Activated T-helper 2 cell treated with anti-CD3 and anti-CD28 coated beads, Interferon-gamma antibody, Interleukin-2, Interleukin-4, amounts not matched to agents 10 μg/mL and 5 μg/mL and 100 μg/mL, durations not matched to agents 14 hours and 24 hours and 36 hours (primary cell): ENCODE measurements at regions of chr1 and their contacts with region 1.

Region 1: GRCh38 chr1:226679853-226680516 is 59.1 kb downstream of the ITPKB start:
- DNase-seq: peak; percentile 68
- H3K4me3 Mint-ChIP-seq: peak overlapping the region; percentile 79
- H3K27ac Mint-ChIP-seq: peak overlapping the region; percentile 95
- H3K4me1 Mint-ChIP-seq: peaks cover 88% of the 10 kb centered on the region
- H3K27me3 Mint-ChIP-seq: no peaks in the 10 kb centered on the region

Region 2: GRCh38 chr1:226457307-226457712 is 222.7 kb before region 1 on chr1:
- intact Hi-C with region 1: no loop called
- DNase-seq: peak; percentile 19
- H3K4me3 Mint-ChIP-seq: peak overlapping the region; percentile 28
- H3K27ac Mint-ChIP-seq: peak overlapping the region; percentile 6
- H3K4me1 Mint-ChIP-seq: peaks cover 7% of the 10 kb centered on the region
- H3K27me3 Mint-ChIP-seq: peaks cover 10% of the 10 kb centered on the region

Region 3: GRCh38 chr1:226642876-226643576 is 37.0 kb before region 1 on chr1:
- intact Hi-C with region 1: loop called (anchors 5 kb)
- DNase-seq: no peak
- H3K4me3 Mint-ChIP-seq: peak overlapping the region; percentile 47
- H3K27ac Mint-ChIP-seq: peak overlapping the region; percentile 84
- H3K4me1 Mint-ChIP-seq: peaks cover 28% of the 10 kb centered on the region
- H3K27me3 Mint-ChIP-seq: no peaks in the 10 kb centered on the region

Region 4: GRCh38 chr1:226662642-226663326 is 17.2 kb before region 1 on chr1:
- intact Hi-C with region 1: loop called (anchors 1 kb)
- DNase-seq: peak; percentile 80
- H3K4me3 Mint-ChIP-seq: peak overlapping the region; percentile 5
- H3K27ac Mint-ChIP-seq: peak overlapping the region; percentile 81
- H3K4me1 Mint-ChIP-seq: peaks cover 74% of the 10 kb centered on the region
- H3K27me3 Mint-ChIP-seq: no peaks in the 10 kb centered on the region

Region 5: GRCh38 chr1:226702957-226703831 is 23.2 kb after region 1 on chr1:
- intact Hi-C with region 1: loop called (anchors 2 kb)
- DNase-seq: peak; percentile 76
- H3K4me3 Mint-ChIP-seq: peak overlapping the region; percentile 75
- H3K27ac Mint-ChIP-seq: peak overlapping the region; percentile 84
- H3K4me1 Mint-ChIP-seq: peaks cover 59% of the 10 kb centered on the region
- H3K27me3 Mint-ChIP-seq: no peaks in the 10 kb centered on the region